WTC11 (cell line): ENCODE measurements at regions of chr5 and their contacts with region 1.

Region 1: GRCh38 chr5:177403792-177404640 is 3.6 kb upstream of the PFN3 start:
- DNase-seq: peak; percentile 75
- ATAC-seq: peak; percentile 26
- H3K4me3 Mint-ChIP-seq: peak overlapping the region; percentile 84
- H3K27ac Mint-ChIP-seq: no peak overlapping the region
- H3K4me1 Mint-ChIP-seq: peaks cover 9% of the 10 kb centered on the region
- H3K27me3 Mint-ChIP-seq: peaks cover 83% of the 10 kb centered on the region
- CTCF ChIP-seq: no peak

Region 2: DNA sequence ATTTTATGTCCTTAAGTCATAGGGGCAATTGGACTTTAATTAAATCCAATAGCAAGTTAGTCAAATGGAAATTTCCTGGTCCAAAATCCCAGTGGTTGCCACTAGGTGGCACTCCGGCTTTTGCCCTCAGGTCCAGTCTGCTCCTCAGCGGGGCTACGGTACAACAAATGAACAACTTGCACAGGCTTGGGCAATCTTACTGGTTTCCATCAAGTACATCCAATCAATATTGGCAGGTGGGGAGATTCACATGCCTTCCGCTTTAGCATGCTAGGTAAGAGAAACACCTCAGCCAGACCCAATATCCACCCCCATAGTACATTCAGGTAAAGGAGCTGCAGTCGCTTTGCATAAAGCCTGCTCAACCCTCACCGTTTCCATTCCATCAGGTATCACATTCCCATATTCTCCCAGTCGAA is 86.0 kb before region 1 on chr5:
- CTCF ChIA-PET with region 1: interaction called, 17 read pairs
- POLR2A ChIA-PET with region 1: no interaction called
- DNase-seq: peak; percentile 83
- ATAC-seq: peak; percentile 57
- H3K4me3 Mint-ChIP-seq: peak overlapping the region; percentile 17; the same call in 1 of the 2 replicates
- H3K27ac Mint-ChIP-seq: peak overlapping the region; percentile 70
- H3K4me1 Mint-ChIP-seq: peaks cover 11% of the 10 kb centered on the region
- H3K27me3 Mint-ChIP-seq: no peaks in the 10 kb centered on the region
- CTCF ChIP-seq: peak; percentile 72

Region 3: DNA sequence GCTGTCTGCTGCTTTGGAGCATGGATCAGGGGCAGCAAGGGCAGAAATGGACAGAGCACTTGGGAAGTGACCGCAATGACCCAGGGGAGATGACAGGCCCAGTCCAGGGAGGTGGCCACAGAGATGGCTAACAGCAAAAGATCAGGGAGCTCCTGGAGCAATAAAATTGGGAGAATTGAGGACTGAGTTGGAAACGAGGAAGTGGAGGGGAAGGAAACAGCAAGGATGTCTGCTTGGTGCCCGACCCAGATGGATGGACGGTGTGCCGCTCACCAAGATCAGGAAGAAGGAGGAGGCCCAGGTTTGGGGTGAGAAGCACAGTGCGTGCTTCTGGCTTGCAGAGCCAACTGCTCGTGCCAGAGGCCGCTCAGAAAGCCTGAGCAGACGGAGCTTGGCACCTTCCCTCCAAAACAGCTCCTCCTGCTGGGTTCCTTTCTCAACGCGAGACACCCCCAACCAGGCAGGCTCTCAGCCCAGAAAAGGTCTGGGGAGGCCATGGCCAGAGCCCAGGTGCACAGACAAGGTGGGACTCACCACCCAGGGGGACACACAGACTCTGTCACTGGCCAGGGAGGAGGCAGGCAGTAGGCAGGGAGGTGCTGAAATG is 21.5 kb before region 1 on chr5:
- CTCF ChIA-PET with region 1: interaction called, 202 read pairs
- POLR2A ChIA-PET with region 1: interaction called, 5 read pairs
- DNase-seq: peak; percentile 46
- ATAC-seq: peak; percentile 70
- H3K4me3 Mint-ChIP-seq: no peak overlapping the region
- H3K27ac Mint-ChIP-seq: no peak overlapping the region
- H3K4me1 Mint-ChIP-seq: peaks cover 17% of the 10 kb centered on the region
- H3K27me3 Mint-ChIP-seq: peaks cover 18% of the 10 kb centered on the region
- CTCF ChIP-seq: no peak

Region 4: DNA sequence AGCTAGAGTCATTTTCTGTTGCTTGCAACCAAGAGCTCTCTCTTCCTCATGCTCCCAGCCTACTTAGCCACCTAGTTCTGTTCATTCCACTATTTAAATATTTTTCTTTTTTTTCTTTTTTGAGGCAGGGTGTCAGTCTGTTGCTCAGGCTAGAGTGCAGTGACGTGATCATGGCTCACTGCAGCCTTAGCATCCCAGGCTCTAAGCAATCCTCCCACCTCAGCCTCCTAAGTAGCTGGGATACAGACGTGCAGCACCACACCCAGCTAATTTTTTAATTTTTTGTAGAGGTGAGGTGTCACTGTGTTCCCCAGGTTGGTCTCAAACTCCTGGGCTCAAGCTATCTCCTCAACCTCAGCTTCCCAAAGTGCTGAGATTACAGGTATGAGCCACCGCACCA is 10.5 kb after region 1 on chr5:
- CTCF ChIA-PET with region 1: interaction called, 32 read pairs
- POLR2A ChIA-PET with region 1: interaction called, 4 read pairs
- DNase-seq: no peak
- ATAC-seq: no peak
- H3K4me3 Mint-ChIP-seq: no peak overlapping the region
- H3K27ac Mint-ChIP-seq: no peak overlapping the region
- H3K4me1 Mint-ChIP-seq: no peaks in the 10 kb centered on the region
- H3K27me3 Mint-ChIP-seq: peaks cover 54% of the 10 kb centered on the region
- CTCF ChIP-seq: no peak

Region 5: DNA sequence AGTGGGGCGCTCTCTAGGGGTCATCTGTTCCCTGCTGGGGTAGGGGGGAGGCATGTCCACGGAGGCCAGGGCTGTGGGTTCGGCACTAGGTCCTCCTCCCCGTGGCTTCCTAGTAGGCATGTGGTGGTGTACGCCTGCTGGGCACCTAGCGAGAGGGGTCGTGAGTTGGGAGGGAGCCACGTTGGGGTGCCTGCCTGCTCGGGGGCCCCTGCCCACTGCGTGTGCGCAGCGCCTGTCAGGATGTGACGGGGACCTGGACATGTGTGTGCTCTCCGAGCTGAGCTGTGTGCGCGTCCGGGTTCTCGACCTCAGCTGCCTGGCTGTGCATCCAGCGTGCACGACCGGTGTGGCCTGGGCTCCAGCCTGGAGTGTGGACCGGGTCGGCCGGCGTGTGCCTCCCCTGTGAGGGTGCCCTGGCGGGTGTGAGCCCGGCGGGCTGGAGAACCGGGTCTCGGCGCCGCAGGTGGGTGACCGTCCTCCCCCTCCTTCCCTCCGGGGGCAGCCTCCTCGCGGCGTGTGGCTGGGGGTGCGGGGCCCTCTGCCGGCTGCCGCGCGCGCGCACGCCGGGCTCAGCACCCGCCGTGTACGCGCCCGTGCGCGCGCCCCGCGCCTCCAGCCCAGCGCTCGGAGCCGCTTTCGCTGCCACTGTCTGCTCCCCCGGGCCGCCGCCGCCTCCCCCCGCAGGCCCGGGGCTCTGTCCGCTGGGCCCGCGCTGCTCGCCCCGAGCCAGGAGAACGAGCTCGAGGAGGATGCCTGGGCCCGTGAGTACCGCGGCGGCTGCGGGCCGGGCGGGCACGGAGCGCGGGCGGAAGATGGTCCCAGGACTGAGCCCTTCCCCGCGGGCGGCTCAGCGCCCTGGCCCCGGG is 42.4 kb after region 1 on chr5 and contains the start of gene PRR7:
- CTCF ChIA-PET with region 1: interaction called, 91 read pairs
- POLR2A ChIA-PET with region 1: interaction called, 38 read pairs
- DNase-seq: peak; percentile 60
- ATAC-seq: peak; percentile 14
- H3K4me3 Mint-ChIP-seq: peak within 1 kb of the TSS; percentile 66
- H3K27ac Mint-ChIP-seq: no peak within 1 kb of the TSS
- H3K4me1 Mint-ChIP-seq: peaks cover 44% of the 10 kb centered on the region
- H3K27me3 Mint-ChIP-seq: peaks cover 41% of the 10 kb centered on the region
- CTCF ChIP-seq: no peak
- total RNA-seq, gene PRR7: 13.1 to 14.7 TPM (median 14.6 TPM) in 3 replicates

Region 6: DNA sequence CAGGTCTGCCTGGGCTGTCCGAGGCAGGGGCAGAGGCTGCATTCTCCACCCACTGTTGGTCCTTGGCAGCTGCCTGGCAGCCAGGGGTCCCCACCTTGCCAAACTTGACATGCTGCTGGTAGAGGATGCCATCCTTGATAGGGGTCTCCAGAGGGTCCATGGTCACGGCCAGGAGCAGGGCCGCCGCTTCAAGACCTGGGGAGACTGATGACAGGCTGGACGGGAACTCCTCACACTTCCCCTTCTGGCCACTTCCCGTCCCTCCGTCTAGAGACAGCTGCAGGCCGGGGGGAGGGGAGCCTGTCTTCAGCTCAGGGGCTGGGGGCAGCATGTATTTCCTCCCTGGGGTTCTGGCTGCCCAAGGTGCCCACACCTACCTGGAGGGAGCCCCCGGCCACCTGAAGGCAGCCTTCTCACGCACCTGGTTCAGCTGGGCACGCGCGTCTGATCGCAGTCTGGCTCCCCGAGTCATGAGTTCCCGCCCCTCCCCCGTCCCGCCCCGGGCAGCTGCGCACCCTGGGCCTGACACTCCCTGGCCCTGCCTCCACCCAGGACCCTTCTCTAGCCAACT is 105.5 kb after region 1 on chr5 and contains the start of gene DOK3:
- CTCF ChIA-PET with region 1: interaction called, 10 read pairs
- POLR2A ChIA-PET with region 1: no interaction called
- DNase-seq: no peak
- ATAC-seq: peak; percentile 21
- H3K4me3 Mint-ChIP-seq: no peak within 1 kb of the TSS
- H3K27ac Mint-ChIP-seq: peak within 1 kb of the TSS; percentile 90
- H3K4me1 Mint-ChIP-seq: peaks cover 17% of the 10 kb centered on the region
- H3K27me3 Mint-ChIP-seq: no peaks in the 10 kb centered on the region
- CTCF ChIP-seq: no peak
- total RNA-seq, gene DOK3: 9.0 to 9.9 TPM (median 9.0 TPM) in 3 replicates